A673 (cell line): ENCODE measurements at regions of chr3 and their contacts with region 1.

Region 1: DNA sequence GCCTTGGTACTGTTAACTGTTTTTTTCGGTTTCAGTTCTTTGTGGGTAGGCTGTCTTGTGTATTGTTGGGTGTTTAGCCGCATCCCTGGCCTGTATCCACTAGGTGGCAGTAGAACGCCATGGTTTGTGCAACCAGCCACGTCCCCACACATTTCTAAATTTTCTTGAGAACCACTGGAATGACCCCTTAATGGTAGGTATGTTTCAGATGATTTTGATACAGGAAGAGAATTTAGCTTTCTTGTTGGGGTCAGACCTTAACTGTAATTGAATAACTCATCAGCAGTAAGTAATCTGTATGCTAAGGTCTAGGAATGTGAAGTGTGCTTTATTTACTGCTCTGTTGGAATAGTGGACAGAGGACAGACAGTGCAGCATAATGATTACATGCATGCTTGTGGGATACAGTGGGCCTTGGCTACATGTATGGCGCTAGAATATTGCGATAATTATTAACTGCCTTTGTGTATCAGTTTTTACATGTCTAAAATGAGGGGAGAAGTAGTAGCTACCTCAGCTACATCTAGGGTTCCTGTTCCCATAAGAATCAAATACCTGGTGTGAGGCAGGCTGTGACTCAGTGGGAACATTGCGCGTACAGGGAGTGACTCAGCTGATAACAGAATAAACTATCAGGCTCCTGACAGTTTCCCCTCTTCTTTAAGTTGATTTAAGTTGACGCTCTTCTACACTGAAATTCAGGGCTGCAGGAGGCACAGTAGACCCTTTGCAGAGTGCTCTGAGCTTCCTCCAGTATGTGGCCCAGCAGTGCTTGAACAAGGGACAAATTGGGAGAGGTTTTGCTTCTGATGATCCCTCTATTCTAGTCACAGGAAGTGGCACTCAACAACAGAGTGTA is 25.0 kb upstream of the GPR171 start:
- DNase-seq: peak; percentile 84
- H3K4me3 ChIP-seq: no peak overlapping the region
- H3K27ac ChIP-seq: no peak overlapping the region
- H3K4me1 ChIP-seq: no peaks in the 10 kb centered on the region
- H3K27me3 ChIP-seq: no peaks in the 10 kb centered on the region
- CTCF ChIP-seq: peak; percentile 93

Region 2: DNA sequence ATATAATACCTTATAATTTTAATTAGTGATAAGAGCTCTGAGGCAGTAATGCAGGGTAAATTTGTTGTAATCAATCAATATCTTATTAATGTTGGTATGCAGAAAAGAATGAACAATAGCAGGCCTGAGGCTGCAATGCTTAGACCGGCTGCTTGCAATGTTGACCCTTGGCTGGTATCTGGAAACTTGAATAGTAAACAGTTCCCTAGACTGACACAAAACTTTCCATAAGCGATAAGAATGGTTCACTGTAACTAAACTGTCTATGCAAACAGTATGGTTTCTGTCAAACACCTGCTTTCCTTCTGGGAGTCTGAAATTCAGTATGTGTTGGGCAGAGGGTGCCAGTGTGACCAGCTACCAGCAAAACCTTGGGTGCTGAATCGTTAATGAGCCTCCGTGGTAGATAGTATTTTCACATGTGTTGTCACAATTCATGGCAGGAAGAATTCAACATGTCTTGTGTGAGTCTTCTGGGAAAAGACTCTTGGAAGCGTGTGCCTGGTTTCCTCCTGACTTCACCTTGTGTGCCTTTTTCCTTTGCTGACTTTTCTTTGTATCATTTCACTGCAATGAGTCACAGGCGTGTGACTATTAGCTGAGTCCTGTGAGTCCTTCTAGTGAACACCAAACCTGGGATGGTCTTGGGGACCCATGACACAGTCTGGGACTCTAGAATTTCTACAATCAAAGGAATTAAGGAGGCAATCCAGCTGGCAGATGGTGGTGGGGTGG is 224.8 kb before region 1 on chr3:
- CTCF ChIA-PET with region 1: no interaction called
- POLR2A ChIA-PET with region 1: no interaction called
- intact Hi-C with region 1: no loop called
- DNase-seq: no peak
- H3K4me3 ChIP-seq: no peak overlapping the region
- H3K27ac ChIP-seq: no peak overlapping the region
- H3K4me1 ChIP-seq: no peaks in the 10 kb centered on the region
- H3K27me3 ChIP-seq: no peaks in the 10 kb centered on the region
- CTCF ChIP-seq: no peak

Region 3: DNA sequence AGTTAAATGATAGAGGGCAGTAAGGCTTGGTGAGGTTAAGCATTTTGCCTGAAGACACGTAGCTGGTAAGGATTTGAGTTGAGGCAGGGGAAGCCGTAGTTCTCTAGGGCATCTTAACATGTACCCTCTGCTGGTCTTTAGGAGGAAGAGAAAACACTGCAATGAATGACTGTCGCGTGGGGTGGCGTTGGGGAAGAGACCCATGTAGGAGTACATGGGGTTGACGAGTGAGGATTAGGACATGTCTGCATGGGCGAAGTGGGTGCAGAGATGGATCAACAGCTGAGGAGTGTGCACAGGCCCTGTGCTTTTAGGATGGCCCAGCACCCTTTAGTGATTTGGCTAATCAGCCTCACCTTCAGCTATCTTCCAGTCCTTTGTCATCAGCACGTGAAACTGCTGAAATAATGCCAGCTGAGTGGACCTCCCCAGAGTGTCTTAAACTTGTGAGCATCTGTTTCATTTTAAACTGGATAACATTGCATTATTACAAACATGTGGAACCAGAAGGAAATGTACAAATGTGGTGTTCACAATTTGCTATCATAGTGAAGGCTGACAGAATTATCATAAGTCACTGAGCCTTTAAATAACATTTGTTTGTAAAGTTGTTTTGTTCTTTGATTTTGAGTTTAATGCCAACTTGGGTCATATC is 35.0 kb after region 1 on chr3:
- CTCF ChIA-PET with region 1: no interaction called
- POLR2A ChIA-PET with region 1: no interaction called
- intact Hi-C with region 1: no loop called
- DNase-seq: no peak
- H3K4me3 ChIP-seq: no peak overlapping the region
- H3K27ac ChIP-seq: no peak overlapping the region
- H3K4me1 ChIP-seq: peaks cover 12% of the 10 kb centered on the region
- H3K27me3 ChIP-seq: no peaks in the 10 kb centered on the region
- CTCF ChIP-seq: no peak

Region 4: GRCh38 chr3:151282921-151283320 is 54.9 kb after region 1 on chr3:
- CTCF ChIA-PET with region 1: interaction called, 19 read pairs
- POLR2A ChIA-PET with region 1: no interaction called
- intact Hi-C with region 1: loop called (anchors 1 kb)
- DNase-seq: peak; percentile 73
- H3K4me3 ChIP-seq: no peak overlapping the region
- H3K27ac ChIP-seq: no peak overlapping the region
- H3K4me1 ChIP-seq: no peaks in the 10 kb centered on the region
- H3K27me3 ChIP-seq: no peaks in the 10 kb centered on the region
- CTCF ChIP-seq: peak; percentile 67

Region 5: GRCh38 chr3:151425627-151426335 is 197.7 kb after region 1 on chr3:
- CTCF ChIA-PET with region 1: no interaction called
- POLR2A ChIA-PET with region 1: no interaction called
- intact Hi-C with region 1: loop called (anchors 10 kb)
- DNase-seq: peak; percentile 90
- H3K4me3 ChIP-seq: no peak overlapping the region
- H3K27ac ChIP-seq: peak overlapping the region; percentile 35
- H3K4me1 ChIP-seq: peaks cover 20% of the 10 kb centered on the region
- H3K27me3 ChIP-seq: no peaks in the 10 kb centered on the region
- CTCF ChIP-seq: peak; percentile 80

Region 6: DNA sequence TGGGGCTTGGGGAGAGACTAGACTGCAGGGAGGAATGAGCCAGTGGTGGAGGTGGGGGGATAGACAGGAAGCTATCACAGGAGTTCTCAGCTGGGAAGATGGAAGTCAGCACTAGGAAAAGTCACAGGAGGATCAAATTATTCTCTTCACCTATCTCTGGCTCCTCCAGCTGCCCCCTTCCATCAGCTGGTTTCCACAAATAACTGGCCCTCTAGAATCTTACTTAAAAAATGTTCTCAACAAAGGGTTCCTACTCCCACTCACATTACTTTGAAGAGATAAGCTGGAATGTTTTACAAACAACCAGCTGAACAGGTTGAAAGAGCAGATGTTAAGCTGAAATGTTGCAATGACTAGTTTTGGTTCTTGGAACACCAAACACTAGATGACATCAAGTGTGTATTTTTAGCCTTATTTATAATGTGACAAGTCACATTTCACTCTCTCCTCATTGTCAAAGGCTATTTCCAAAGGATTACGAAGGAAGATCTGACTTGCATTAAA is 403.0 kb after region 1 on chr3:
- CTCF ChIA-PET with region 1: no interaction called
- POLR2A ChIA-PET with region 1: no interaction called
- intact Hi-C with region 1: no loop called
- DNase-seq: peak; percentile 23
- H3K4me3 ChIP-seq: no peak overlapping the region
- H3K27ac ChIP-seq: no peak overlapping the region
- H3K4me1 ChIP-seq: peaks cover 10% of the 10 kb centered on the region
- H3K27me3 ChIP-seq: no peaks in the 10 kb centered on the region
- CTCF ChIP-seq: no peak

Region 7: GRCh38 chr3:151686257-151686656 is 458.2 kb after region 1 on chr3:
- CTCF ChIA-PET with region 1: no interaction called
- POLR2A ChIA-PET with region 1: no interaction called
- intact Hi-C with region 1: no loop called
- DNase-seq: no peak
- H3K4me3 ChIP-seq: no peak overlapping the region
- H3K27ac ChIP-seq: no peak overlapping the region
- H3K4me1 ChIP-seq: no peaks in the 10 kb centered on the region
- H3K27me3 ChIP-seq: no peaks in the 10 kb centered on the region
- CTCF ChIP-seq: no peak

Region 8: DNA sequence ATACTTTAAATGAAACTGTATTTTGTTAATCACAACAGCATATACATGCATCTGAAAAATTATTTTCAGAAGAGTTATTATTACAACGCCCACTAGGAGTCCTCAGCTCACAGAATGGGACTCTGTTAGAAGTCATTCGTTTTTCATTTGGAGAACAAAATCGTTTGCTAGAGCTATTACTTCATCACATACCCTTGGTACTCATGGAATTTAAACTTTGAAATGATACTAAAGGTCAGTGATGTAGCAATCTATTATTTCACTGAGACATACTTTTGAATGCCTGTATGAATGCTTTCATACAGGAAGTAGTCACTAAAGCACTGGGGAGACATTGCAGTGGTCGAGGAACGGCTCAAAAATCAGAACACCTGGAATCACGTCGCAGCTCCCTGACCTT is 1238.7 kb after region 1 on chr3:
- CTCF ChIA-PET with region 1: no interaction called
- POLR2A ChIA-PET with region 1: no interaction called
- intact Hi-C with region 1: loop called (anchors 10 kb)
- DNase-seq: peak; percentile 65
- H3K4me3 ChIP-seq: no peak overlapping the region
- H3K27ac ChIP-seq: no peak overlapping the region
- H3K4me1 ChIP-seq: peaks cover 1% of the 10 kb centered on the region
- H3K27me3 ChIP-seq: no peaks in the 10 kb centered on the region
- CTCF ChIP-seq: peak; percentile 68